ENCODE measurements at regions of chr1 and their contacts with region 1.

Region 1: DNA sequence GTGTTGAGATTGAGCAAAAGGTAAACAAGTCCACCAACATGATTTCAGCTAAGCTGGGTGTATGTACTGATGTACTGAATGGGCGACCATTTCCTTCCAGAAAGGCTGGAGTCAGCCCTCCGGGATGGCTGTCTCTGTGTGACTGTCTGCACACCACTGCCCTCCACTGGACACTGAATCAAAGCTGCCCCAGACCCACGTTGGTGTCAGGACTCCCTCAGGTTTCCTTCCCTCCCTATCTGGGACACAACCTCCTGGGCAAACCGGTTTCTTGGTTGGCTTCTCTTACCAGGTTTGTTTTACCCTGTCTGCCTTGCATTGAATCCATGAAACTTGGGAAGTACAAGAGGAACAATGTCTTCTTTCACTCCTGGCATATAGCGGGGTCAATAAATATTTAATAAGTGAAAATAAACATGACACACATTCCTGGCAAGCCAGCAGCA is 5.3 kb upstream of the SRP9 start:
- DNase-seq: peak; percentile 94
- H3K4me3 ChIP-seq: no peak overlapping the region
- H3K4me3 Mint-ChIP-seq: no peak overlapping the region
- H3K27ac Mint-ChIP-seq: peak overlapping the region; percentile 48
- H3K4me1 ChIP-seq: peaks cover 51% of the 10 kb centered on the region
- H3K4me1 Mint-ChIP-seq: peaks cover 42% of the 10 kb centered on the region
- H3K27me3 ChIP-seq: no peaks in the 10 kb centered on the region
- H3K27me3 Mint-ChIP-seq: no peaks in the 10 kb centered on the region
- CTCF ChIP-seq: peak; percentile 87 to 89

Region 2: DNA sequence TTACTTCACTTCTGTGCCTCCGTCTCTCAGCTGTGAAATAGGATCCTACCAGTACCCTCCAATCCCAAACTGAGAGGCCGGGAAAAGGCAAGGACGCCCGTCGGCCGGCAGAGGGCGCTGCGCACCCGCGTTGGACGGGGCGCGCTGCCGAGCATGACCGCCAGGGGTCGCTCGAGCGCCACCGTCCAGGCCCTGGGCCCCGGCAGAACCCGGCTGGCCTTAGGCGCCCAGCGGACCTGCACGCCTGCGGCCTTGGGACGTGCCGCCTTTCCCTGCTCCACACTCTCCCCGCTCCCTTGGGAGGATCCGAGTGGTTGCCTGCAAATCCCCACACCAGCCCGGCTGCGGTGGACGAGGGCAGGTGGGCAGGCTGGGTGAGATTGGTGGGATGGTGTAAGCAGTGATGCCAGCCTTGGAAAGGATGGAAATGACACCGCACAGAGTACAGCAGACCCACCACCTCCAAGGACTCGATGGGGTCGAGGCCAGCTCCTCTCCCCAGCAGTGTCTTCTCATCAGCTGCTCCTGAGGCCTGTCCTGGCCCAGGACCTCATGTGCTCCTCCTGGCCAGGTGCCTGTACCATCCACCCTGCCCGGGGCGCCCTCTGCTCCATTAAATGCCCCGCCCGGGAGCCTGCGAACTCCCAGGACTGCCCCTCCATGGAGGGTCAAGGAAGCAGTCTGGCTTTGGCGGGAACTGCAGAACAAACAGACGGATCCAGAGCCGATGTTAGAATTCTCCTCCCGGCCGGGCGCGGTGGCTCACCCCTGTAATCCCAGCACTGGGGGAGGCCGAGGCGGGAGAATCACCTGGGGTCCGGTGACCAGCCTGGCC is 297.1 kb before region 1 on chr1:
- CTCF ChIA-PET with region 1: interaction called, 15 read pairs
- POLR2A ChIA-PET with region 1: no interaction called
- intact Hi-C with region 1: loop called (anchors 1 kb)
- DNase-seq: peak in 1 of 2 experiments; percentile 81
- H3K4me3 ChIP-seq: no peak overlapping the region
- H3K4me3 Mint-ChIP-seq: no peak overlapping the region
- H3K27ac Mint-ChIP-seq: no peak overlapping the region
- H3K4me1 ChIP-seq: peaks cover 11% of the 10 kb centered on the region
- H3K4me1 Mint-ChIP-seq: no peaks in the 10 kb centered on the region
- H3K27me3 ChIP-seq: no peaks in the 10 kb centered on the region
- H3K27me3 Mint-ChIP-seq: no peaks in the 10 kb centered on the region
- CTCF ChIP-seq: peak; percentile 98 to 100

Region 3: DNA sequence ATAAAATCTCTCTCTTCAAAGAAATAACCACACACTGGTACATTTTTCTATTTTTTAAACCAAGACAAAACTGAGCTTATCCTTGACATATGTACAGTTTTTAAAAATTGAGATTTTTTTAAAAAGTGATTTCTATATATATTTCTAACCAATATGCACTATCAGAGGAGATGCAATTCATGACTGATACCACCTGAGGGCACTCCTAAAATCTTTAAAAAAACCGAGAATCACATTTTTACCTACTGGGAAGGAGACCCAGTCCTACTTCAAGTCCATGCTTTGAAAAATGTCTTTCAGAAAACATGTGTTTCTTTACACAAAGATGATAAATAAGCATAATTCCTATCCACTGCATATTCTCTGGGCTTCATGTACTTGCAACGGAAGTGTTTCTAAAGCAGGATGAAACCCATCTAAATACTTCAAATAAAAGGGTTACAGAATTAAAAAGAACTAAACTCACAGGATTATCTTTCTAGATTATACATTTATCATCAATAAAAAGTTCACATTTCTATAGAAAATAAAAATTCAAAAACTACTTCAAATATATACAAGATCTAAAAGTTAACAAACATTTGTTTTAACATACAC is 218.0 kb before region 1 on chr1:
- CTCF ChIA-PET with region 1: interaction called, 3 read pairs
- POLR2A ChIA-PET with region 1: no interaction called
- intact Hi-C with region 1: loop called (anchors 1 kb)
- DNase-seq: peak in 1 of 2 experiments; percentile 31
- H3K4me3 ChIP-seq: no peak overlapping the region
- H3K4me3 Mint-ChIP-seq: no peak overlapping the region
- H3K27ac Mint-ChIP-seq: no peak overlapping the region
- H3K4me1 ChIP-seq: no peaks in the 10 kb centered on the region
- H3K4me1 Mint-ChIP-seq: no peaks in the 10 kb centered on the region
- H3K27me3 ChIP-seq: no peaks in the 10 kb centered on the region
- H3K27me3 Mint-ChIP-seq: no peaks in the 10 kb centered on the region
- CTCF ChIP-seq: peak; percentile 50 to 56

Region 4: GRCh38 chr1:225642177-225642576 is 130.2 kb before region 1 on chr1:
- CTCF ChIA-PET with region 1: no interaction called
- POLR2A ChIA-PET with region 1: no interaction called
- intact Hi-C with region 1: no loop called
- DNase-seq: no peak
- H3K4me3 ChIP-seq: no peak overlapping the region
- H3K4me3 Mint-ChIP-seq: no peak overlapping the region
- H3K27ac Mint-ChIP-seq: no peak overlapping the region
- H3K4me1 ChIP-seq: peaks cover 12% of the 10 kb centered on the region
- H3K4me1 Mint-ChIP-seq: peaks cover 20% of the 10 kb centered on the region
- H3K27me3 ChIP-seq: no peaks in the 10 kb centered on the region
- H3K27me3 Mint-ChIP-seq: no peaks in the 10 kb centered on the region
- CTCF ChIP-seq: no peak

Region 5: GRCh38 chr1:225652729-225653462 is 119.5 kb before region 1 on chr1 and contains the start of gene ENAH:
- CTCF ChIA-PET with region 1: interaction called, 11 read pairs
- POLR2A ChIA-PET with region 1: interaction called, 6 read pairs
- intact Hi-C with region 1: loop called (anchors 2 kb)
- DNase-seq: peak; percentile 81 to 86
- H3K4me3 ChIP-seq: peak within 1 kb of the TSS; percentile 94
- H3K4me3 Mint-ChIP-seq: peak within 1 kb of the TSS; percentile 99
- H3K27ac Mint-ChIP-seq: peak within 1 kb of the TSS; percentile 96
- H3K4me1 ChIP-seq: peaks cover 13% of the 10 kb centered on the region
- H3K4me1 Mint-ChIP-seq: peaks cover 24% of the 10 kb centered on the region
- H3K27me3 ChIP-seq: no peaks in the 10 kb centered on the region
- H3K27me3 Mint-ChIP-seq: no peaks in the 10 kb centered on the region
- CTCF ChIP-seq: no peak
- total RNA-seq, gene ENAH: 78.0 and 80.0 TPM in 2 replicates

Region 6: GRCh38 chr1:225694151-225694603 is 78.2 kb before region 1 on chr1:
- CTCF ChIA-PET with region 1: no interaction called
- POLR2A ChIA-PET with region 1: interaction called, 5 read pairs
- intact Hi-C with region 1: loop called (anchors 2 kb)
- DNase-seq: peak; percentile 67 to 78
- H3K4me3 ChIP-seq: no peak overlapping the region
- H3K4me3 Mint-ChIP-seq: no peak overlapping the region
- H3K27ac Mint-ChIP-seq: peak overlapping the region; percentile 73
- H3K4me1 ChIP-seq: peaks cover 19% of the 10 kb centered on the region
- H3K4me1 Mint-ChIP-seq: peaks cover 16% of the 10 kb centered on the region
- H3K27me3 ChIP-seq: no peaks in the 10 kb centered on the region
- H3K27me3 Mint-ChIP-seq: no peaks in the 10 kb centered on the region
- CTCF ChIP-seq: no peak

Region 7: GRCh38 chr1:225720937-225721336 is 51.4 kb before region 1 on chr1:
- CTCF ChIA-PET with region 1: no interaction called
- POLR2A ChIA-PET with region 1: no interaction called
- intact Hi-C with region 1: no loop called
- DNase-seq: no peak
- H3K4me3 ChIP-seq: no peak overlapping the region
- H3K4me3 Mint-ChIP-seq: no peak overlapping the region
- H3K27ac Mint-ChIP-seq: no peak overlapping the region
- H3K4me1 ChIP-seq: no peaks in the 10 kb centered on the region
- H3K4me1 Mint-ChIP-seq: no peaks in the 10 kb centered on the region
- H3K27me3 ChIP-seq: no peaks in the 10 kb centered on the region
- H3K27me3 Mint-ChIP-seq: no peaks in the 10 kb centered on the region
- CTCF ChIP-seq: no peak

Region 8: DNA sequence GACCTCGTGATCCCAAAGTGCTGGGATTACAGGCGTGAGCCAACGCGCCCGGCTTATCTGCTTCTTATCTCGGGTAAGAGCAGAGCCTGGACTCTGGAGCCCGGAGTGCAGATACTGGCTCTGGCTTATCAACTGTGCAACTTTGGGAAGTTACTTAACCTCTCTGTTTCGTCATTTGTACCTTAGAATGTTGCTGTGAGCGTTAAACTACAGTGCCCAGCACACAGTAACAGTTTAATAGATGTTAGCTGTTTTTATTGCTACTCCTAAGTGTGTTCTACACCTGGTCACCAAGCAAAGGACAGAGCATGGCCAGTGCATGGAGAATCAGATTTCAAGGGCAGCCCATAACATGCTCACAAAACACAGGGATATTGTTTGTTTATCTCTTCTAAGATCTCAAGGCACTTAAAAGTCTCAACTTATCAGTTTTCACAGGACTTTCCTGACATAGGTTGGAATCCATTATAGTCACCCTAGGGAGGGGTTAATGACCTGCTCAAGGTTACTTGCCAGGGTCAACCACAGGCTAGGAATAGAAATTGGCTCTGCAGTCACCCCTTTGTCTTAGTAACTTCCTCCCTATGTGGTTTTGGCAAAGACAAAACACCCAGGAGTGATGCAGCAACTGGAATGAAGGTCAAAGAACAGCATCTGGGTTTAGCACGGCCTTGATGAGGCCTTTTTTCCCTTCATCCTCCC is 17.3 kb before region 1 on chr1:
- CTCF ChIA-PET with region 1: no interaction called
- POLR2A ChIA-PET with region 1: interaction called, 5 read pairs
- intact Hi-C with region 1: loop called (anchors 2 kb)
- DNase-seq: peak; percentile 84 to 94
- H3K4me3 ChIP-seq: no peak overlapping the region
- H3K4me3 Mint-ChIP-seq: no peak overlapping the region
- H3K27ac Mint-ChIP-seq: peak overlapping the region; percentile 75
- H3K4me1 ChIP-seq: peaks cover 39% of the 10 kb centered on the region
- H3K4me1 Mint-ChIP-seq: peaks cover 35% of the 10 kb centered on the region
- H3K27me3 ChIP-seq: no peaks in the 10 kb centered on the region
- H3K27me3 Mint-ChIP-seq: no peaks in the 10 kb centered on the region
- CTCF ChIP-seq: no peak

Region 9: DNA sequence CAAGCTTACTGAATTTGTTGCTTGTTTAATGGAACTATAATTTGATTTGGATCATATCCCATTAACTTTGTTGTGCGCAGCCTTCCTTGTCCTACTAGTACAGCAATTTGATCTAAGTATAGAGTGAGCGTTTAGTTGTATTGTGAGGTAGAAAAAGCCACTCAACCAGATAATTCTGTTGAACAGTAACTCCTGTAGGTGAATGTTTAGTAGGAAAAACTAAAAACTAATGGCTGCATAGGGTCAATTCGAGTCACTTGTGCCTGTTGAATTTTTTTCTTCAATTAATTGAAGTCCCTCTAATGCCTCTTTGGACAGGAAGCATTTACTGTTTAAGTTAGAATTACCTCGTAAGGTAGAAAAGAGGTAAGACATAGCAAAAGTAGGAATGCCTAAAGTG is 22.6 kb after region 1 on chr1:
- CTCF ChIA-PET with region 1: no interaction called
- POLR2A ChIA-PET with region 1: no interaction called
- intact Hi-C with region 1: no loop called
- DNase-seq: no peak
- H3K4me3 ChIP-seq: no peak overlapping the region
- H3K4me3 Mint-ChIP-seq: no peak overlapping the region
- H3K27ac Mint-ChIP-seq: no peak overlapping the region
- H3K4me1 ChIP-seq: no peaks in the 10 kb centered on the region
- H3K4me1 Mint-ChIP-seq: no peaks in the 10 kb centered on the region
- H3K27me3 ChIP-seq: no peaks in the 10 kb centered on the region
- H3K27me3 Mint-ChIP-seq: no peaks in the 10 kb centered on the region
- CTCF ChIP-seq: no peak

Region 10: DNA sequence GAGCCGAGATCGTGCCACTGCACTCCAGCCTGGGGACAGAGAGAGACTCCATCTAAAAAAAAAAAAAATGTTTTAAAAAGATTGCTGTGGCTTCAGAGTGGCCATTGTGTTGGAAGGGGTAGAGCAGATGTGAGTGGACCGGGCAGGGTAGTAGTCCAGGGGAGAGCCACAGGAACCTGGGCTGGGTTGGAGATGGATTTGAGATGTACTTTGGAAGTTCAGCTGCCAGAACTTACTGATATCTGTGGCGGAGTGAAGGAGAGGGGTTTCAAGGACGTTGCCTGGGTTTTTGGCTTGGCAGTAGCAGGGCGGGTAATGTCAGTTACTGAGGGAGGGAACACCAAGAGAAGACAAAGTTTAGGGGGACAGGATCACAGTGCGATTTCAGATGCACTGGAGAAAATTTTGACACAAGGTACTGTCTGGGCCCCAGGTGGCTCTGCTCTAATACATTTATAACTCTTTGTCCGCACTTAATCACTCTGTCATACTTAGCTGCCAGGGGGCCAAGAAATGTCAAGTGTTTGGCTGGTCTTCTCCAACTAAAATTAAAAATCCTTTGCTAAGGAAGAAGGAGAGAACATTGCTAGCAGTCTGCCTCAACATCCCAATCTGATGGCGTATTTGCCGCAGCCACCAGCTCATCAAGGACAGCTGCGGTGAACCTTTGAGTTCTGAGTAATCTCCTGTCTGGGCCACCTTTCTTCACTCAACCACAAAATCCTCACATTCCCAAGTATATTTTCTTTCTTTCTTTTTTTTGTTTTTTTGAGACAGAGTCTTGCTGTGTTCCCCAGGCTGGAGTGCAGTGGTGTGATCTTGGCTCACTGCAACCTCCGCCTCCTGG is 47.2 kb after region 1 on chr1:
- CTCF ChIA-PET with region 1: no interaction called
- POLR2A ChIA-PET with region 1: no interaction called
- intact Hi-C with region 1: no loop called
- DNase-seq: no peak
- H3K4me3 ChIP-seq: no peak overlapping the region
- H3K4me3 Mint-ChIP-seq: no peak overlapping the region
- H3K27ac Mint-ChIP-seq: no peak overlapping the region
- H3K4me1 ChIP-seq: peaks cover 5% of the 10 kb centered on the region
- H3K4me1 Mint-ChIP-seq: peaks cover under 1% of the 10 kb centered on the region
- H3K27me3 ChIP-seq: no peaks in the 10 kb centered on the region
- H3K27me3 Mint-ChIP-seq: no peaks in the 10 kb centered on the region
- CTCF ChIP-seq: no peak

Measured in Caco-2 (cell line).